ENCODE measurements at regions of chr16 and their contacts with region 1.

Region 1: GRCh38 chr16:3106205-3106928 is 6.0 kb upstream of the ZNF205 start:
- DNase-seq: peak; percentile 79 to 95 (median 90)
- ATAC-seq: peak; percentile 94
- H3K4me3 ChIP-seq: peak overlapping the region; percentile 74 to 77
- H3K4me3 Mint-ChIP-seq: peak overlapping the region; percentile 86
- H3K27ac ChIP-seq: peak overlapping the region; percentile 75 to 93
- H3K27ac Mint-ChIP-seq: peak overlapping the region; percentile 89
- H3K4me1 ChIP-seq: peaks cover 24% of the 10 kb centered on the region
- H3K4me1 Mint-ChIP-seq: peaks cover 26% of the 10 kb centered on the region
- H3K27me3 ChIP-seq: no peaks in the 10 kb centered on the region
- H3K27me3 Mint-ChIP-seq: no peaks in the 10 kb centered on the region
- CTCF ChIP-seq: no peak

Region 2: DNA sequence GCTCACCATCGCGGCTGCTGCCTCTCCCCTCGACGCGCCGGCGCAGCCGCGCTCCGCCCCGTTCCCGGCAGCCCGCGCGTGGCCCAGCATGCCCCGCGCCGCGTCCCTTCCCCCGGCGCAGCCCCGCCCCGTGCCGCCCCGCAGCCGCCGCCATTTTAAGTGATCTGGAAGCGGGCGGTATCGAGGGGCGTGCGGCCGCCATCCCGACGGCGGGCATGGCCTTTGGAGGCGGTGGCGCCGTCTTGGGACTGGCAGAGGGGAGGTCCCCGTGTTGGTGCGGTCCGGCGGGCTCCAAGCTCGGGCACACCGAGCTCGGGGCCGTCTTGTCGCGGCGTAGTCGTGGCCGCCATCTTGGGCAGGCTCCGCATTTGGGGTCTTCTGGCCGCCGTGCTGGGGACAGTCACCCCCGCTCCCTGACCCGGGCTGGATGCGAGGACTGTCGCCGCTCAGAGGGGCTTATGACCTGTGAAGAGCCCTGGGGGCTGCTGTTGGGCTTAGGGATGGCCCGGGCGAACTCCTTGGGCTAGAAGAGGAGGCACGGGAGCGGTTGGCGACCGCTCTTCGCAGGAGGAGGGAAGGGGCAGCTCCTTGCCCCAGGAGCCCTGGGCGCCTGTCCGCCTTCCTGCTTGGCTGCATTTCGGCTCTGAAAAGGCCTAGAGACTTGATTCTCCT is 329.0 kb before region 1 on chr16 and contains the start of gene ELOB:
- CTCF ChIA-PET with region 1: no interaction called
- POLR2A ChIA-PET with region 1: no interaction called
- intact Hi-C with region 1: no loop called
- DNase-seq: peak; percentile 78 to 94 (median 88)
- ATAC-seq: peak; percentile 90
- H3K4me3 ChIP-seq: peak within 1 kb of the TSS; percentile 84 to 92
- H3K4me3 Mint-ChIP-seq: peak within 1 kb of the TSS; percentile 95
- H3K27ac ChIP-seq: peak within 1 kb of the TSS; percentile 96 to 99
- H3K27ac Mint-ChIP-seq: peak within 1 kb of the TSS; percentile 98
- H3K4me1 ChIP-seq: peaks cover 30% of the 10 kb centered on the region
- H3K4me1 Mint-ChIP-seq: peaks cover 50% of the 10 kb centered on the region
- H3K27me3 ChIP-seq: no peaks in the 10 kb centered on the region
- H3K27me3 Mint-ChIP-seq: no peaks in the 10 kb centered on the region
- CTCF ChIP-seq: no peak
- total RNA-seq, gene ELOB: 70.3 to 71.5 TPM

Region 3: DNA sequence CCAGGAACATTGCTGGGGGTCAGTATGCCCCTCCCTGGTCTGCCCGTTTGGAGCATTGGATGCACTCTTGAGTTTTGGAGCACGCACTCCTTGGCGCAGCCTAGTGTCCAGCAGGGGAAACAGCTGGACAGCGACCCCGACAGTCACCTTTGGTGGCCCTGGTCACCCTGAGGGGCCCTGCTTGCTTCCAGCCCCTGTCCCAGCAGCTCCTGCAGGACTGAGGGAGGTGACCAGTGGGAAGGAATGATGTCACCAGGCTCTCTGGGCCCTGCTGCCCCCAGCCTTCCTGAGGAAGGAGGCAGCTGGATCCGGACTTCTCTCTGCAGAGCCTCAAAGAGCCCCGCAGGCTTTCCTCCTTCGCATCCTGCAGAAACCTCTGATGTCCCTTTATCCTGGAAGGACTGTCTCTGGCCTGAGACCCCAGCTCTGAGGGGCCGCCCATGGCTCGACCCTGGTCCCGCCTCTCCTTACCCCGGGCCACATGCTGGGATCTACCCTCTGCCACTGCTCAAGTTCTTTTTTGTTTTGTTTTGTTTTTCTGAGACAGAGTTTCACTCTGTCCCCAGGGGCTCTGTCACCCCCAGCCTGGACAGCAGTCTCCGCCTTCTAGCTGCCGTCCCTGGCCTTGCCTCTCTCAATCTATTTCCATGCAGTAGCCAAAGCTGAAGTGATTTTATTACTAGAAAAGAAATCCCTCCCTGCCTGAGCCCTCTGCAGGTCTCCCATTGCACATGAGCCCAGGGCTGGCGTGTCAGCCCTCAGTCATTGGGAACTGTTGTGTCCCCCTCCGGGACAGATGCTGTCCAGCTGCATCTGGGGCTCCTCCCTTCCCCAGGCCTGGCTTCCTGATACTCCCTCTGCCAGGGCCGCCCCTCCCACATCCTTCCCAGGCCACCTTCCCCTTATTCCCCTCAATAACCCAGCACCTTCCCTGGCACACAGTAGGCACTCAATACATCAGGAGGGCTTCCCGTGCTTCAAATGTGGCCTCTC is 18.8 kb before region 1 on chr16:
- CTCF ChIA-PET with region 1: no interaction called
- POLR2A ChIA-PET with region 1: no interaction called
- intact Hi-C with region 1: no loop called
- DNase-seq: no peak
- ATAC-seq: no peak
- H3K4me3 ChIP-seq: peak overlapping the region; percentile 7 to 32
- H3K4me3 Mint-ChIP-seq: no peak overlapping the region
- H3K27ac ChIP-seq: peak overlapping the region in 1 of 2 experiments; percentile 37
- H3K27ac Mint-ChIP-seq: no peak overlapping the region
- H3K4me1 ChIP-seq: peaks cover 22% of the 10 kb centered on the region
- H3K4me1 Mint-ChIP-seq: peaks cover 42% of the 10 kb centered on the region
- H3K27me3 ChIP-seq: no peaks in the 10 kb centered on the region
- H3K27me3 Mint-ChIP-seq: no peaks in the 10 kb centered on the region
- CTCF ChIP-seq: no peak

Region 4: GRCh38 chr16:3123986-3124886 is 17.9 kb after region 1 on chr16:
- CTCF ChIA-PET with region 1: interaction called, 256 read pairs
- POLR2A ChIA-PET with region 1: interaction called, 10 read pairs
- intact Hi-C with region 1: loop called (anchors 1 kb)
- DNase-seq: peak; percentile 88 to 98 (median 97)
- ATAC-seq: peak; percentile 90
- H3K4me3 ChIP-seq: peak overlapping the region; percentile 72 to 89
- H3K4me3 Mint-ChIP-seq: peak overlapping the region; percentile 98
- H3K27ac ChIP-seq: peak overlapping the region; percentile 44 to 72
- H3K27ac Mint-ChIP-seq: peak overlapping the region; percentile 95
- H3K4me1 ChIP-seq: peaks cover 30% of the 10 kb centered on the region
- H3K4me1 Mint-ChIP-seq: peaks cover 45% of the 10 kb centered on the region
- H3K27me3 ChIP-seq: no peaks in the 10 kb centered on the region
- H3K27me3 Mint-ChIP-seq: no peaks in the 10 kb centered on the region
- CTCF ChIP-seq: no peak

Region 5: DNA sequence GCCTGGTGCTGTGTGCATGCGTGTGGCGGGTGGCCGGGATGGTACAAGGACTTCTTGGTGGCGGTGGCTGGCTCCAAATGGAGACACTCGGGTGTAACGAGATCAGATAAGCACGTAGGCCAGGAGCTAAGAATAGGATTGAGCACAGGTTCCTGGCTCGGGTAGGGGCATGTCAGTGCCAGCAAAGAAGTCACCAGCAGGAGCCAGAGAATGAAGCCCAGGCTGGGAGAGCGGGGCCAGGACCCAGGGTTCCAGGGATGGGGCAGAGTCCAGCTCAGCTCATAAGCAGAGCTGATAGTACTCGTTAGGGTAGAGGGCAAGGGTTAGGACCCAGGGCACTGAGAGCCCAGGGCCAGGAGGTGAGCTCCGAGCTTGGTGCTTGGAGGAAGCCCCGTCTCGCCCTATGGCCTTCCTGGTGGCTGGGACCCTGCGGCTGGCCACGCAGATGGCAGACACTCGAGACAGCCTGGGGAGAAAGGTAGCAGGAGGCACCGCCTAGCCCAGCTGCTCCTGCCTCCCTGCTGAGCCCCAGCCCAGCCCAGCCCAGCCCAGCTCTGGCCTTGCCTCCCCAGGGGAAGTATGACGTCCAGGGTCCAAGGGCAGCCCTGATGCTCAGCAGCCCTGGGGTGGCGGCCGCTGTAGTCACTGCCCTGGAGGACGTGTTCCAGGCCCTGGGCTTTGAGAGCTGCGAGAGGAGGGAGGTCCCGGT is 37.4 kb after region 1 on chr16:
- CTCF ChIA-PET with region 1: no interaction called
- POLR2A ChIA-PET with region 1: no interaction called
- intact Hi-C with region 1: no loop called
- DNase-seq: no peak
- ATAC-seq: no peak
- H3K4me3 ChIP-seq: no peak overlapping the region
- H3K4me3 Mint-ChIP-seq: no peak overlapping the region
- H3K27ac ChIP-seq: no peak overlapping the region
- H3K27ac Mint-ChIP-seq: no peak overlapping the region
- H3K4me1 ChIP-seq: no peaks in the 10 kb centered on the region
- H3K4me1 Mint-ChIP-seq: peaks cover 1% of the 10 kb centered on the region
- H3K27me3 ChIP-seq: no peaks in the 10 kb centered on the region
- H3K27me3 Mint-ChIP-seq: no peaks in the 10 kb centered on the region
- CTCF ChIP-seq: no peak

Measured in CD8-positive, alpha-beta T cell (primary cell).